ENCODE measurements at regions of chr11 and their contacts with region 1.

Region 1: DNA sequence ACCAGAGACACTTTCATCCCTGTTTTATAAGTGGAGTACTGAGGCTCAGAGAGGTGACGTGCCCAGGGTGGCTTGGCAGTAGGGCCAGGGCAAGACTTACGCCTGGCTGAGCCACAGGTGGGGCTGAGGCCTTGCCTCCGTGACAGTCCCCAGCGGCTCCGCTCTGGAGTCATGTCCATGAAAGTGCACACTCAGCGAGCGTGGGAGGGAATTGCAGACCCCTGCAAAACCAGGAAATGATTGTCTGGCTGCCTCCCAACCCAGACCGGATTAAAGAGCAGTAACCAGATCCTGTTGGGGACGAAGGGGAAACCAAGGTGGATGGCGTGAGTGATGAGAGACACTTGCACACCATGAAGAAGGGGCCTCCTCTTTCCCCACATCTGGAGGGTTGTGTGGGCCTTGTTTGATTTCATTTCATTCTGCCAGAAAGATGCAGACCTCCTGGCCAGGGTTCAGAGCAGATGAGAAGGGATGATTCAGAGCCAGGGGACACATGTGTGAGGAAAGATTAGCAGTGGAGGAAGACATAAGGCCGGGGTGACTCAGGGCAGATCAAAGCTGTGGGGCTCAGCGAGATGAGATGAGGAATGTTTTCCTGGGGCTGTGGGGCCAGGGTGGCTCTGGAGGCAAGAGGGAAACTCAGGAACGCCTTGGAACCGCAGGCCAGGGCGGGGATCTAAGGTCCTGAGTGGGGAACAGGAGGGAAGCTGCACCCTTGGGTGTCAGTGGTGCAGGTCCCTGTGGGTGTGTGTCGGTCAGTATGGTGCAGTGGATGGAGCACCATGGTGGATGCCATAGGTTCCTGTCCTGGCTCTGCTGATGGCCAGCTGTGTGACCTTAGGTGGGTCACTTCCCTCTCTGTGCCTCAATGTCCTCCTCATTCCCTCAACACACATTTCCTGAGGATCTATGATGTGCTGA is 29.9 kb upstream of the LRRC32 start:
- DNase-seq: peak; percentile 92 to 99 (median 98)
- H3K4me3 ChIP-seq: peak overlapping the region in 2 of 7 experiments; percentile 9 to 18
- H3K27ac ChIP-seq: peak overlapping the region; percentile 13 to 79
- H3K4me1 ChIP-seq: peaks cover 0 to 48% (median 31%) of the 10 kb centered on the region in 4 experiments
- H3K27me3 ChIP-seq: no peaks in the 10 kb centered on the region

Region 2: DNA sequence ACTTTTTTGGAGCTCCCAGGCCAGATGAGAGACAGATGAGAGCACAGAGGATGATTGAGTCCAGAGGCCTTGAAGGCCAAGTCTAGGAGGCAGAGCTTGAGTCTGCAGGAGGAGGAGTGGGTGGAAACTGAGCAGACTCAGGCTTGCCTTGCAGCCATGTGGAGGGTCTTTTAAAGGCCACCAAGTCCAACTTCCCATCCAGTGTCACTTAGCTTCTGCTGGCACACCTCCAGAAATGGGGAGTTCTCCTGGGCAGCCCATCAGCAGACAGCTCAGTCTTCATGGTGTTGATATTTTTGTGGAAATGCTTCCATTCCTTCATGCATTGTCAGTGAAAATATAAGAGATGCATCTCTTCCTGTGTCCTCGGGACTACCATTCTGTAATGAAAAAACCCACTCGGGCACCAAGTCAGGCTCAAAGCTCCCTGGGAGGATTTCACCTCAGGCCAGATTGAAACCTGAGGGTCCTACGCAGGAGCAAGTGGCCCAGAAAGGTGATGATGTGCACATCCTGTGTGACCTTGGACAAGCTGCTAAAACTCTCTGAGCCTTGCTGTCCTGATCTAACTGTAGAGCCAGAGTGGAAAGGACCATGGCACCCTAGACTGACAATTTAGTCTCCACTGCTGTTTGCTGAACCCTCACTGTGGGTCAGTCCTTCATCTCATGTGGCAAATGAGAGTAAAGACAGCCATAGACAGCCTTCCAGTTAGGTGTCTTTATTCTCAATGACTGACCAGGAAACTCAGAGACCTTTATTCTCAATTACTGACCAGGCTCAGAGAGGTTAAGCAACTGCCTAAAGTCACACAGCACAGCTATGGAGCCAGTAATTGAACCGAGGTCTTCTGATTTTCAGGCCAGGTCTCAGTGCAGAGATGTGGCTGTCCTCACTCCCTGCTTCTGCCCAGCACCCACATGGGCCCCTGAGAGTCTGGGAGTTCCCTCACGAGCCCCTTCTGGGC is 27.0 kb before region 1 on chr11:
- CTCF ChIA-PET with region 1: no interaction called
- POLR2A ChIA-PET with region 1: no interaction called
- DNase-seq: no peak
- H3K4me3 ChIP-seq: no peak overlapping the region
- H3K27ac ChIP-seq: no peak overlapping the region
- H3K4me1 ChIP-seq: peaks cover 8 to 63% (median 43%) of the 10 kb centered on the region in 4 experiments
- H3K27me3 ChIP-seq: peaks cover 0 to 22% (median 10%) of the 10 kb centered on the region in 5 experiments

Region 3: GRCh38 chr11:76686261-76687079 is 14.0 kb before region 1 on chr11:
- CTCF ChIA-PET with region 1: interaction called, 24 read pairs
- POLR2A ChIA-PET with region 1: no interaction called
- DNase-seq: peak in 1 of 3 donors; percentile 51
- H3K4me3 ChIP-seq: peak overlapping the region in 4 of 7 experiments; percentile 21 to 55 (median 34)
- H3K27ac ChIP-seq: no peak overlapping the region
- H3K4me1 ChIP-seq: peaks cover 0 to 16% (median 11%) of the 10 kb centered on the region in 4 experiments
- H3K27me3 ChIP-seq: peaks cover 0 to 2% (median 0%) of the 10 kb centered on the region in 5 experiments

Region 4: DNA sequence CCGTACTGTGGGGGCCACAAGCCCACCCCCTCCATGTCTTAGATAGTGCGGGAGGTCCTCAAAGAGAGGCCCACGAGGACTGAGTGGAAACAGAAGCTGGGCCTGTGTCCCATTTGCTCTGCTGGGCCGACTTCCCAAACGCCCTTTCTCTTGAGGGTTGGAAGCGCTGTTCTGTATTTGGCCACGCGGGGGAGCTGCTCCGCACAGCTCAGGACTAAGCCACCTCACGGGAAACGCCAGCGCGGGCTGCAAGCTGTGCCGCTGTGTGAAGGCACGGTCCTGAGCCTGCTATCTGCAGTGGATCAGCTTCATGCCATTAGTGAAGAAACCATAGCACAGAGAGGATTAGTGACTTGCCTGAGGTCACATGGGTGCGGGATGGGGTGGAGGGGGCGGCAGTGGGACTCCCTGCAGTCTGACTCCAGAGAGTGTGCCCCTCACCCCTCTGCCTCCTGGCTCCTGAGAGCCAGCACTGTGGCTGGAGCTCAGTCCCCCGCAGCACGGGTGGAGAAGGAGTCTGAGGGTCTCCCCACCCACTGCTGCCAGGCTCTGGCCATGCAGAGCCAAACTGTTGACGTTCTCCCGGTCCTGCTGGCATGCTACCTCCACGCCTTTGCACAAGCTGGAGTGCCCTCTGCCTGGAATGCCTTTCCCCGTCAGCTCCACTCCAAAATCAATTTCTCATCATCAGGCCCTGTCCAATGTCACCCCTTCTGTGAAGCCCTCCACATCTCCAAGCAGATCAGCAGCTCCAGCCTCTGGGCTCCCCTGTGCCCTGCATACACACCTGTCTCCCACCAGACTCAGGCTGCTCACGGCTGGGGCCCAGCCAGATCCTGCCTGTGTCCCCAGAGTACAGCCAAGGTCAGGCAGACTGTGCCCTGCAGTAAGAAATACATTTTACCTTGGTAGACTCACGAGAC is 21.6 kb after region 1 on chr11:
- CTCF ChIA-PET with region 1: interaction called, 11 read pairs
- POLR2A ChIA-PET with region 1: no interaction called
- DNase-seq: peak; percentile 77 to 89 (median 82)
- H3K4me3 ChIP-seq: no peak overlapping the region
- H3K27ac ChIP-seq: no peak overlapping the region
- H3K4me1 ChIP-seq: peaks cover 0 to 3% (median 1%) of the 10 kb centered on the region in 4 experiments
- H3K27me3 ChIP-seq: peaks cover 0 to 11% (median 4%) of the 10 kb centered on the region in 5 experiments

Region 5: GRCh38 chr11:76734456-76735420 is 34.3 kb after region 1 on chr11:
- CTCF ChIA-PET with region 1: no interaction called
- POLR2A ChIA-PET with region 1: no interaction called
- DNase-seq: no peak
- H3K4me3 ChIP-seq: no peak overlapping the region
- H3K27ac ChIP-seq: no peak overlapping the region
- H3K4me1 ChIP-seq: no peaks in the 10 kb centered on the region
- H3K27me3 ChIP-seq: peaks cover 0 to 15% (median 0%) of the 10 kb centered on the region in 5 experiments

Measured in common myeloid progenitor, CD34-positive (primary cell).